ENCODE measurements at regions of chr2 and their contacts with region 1.

Region 1: DNA sequence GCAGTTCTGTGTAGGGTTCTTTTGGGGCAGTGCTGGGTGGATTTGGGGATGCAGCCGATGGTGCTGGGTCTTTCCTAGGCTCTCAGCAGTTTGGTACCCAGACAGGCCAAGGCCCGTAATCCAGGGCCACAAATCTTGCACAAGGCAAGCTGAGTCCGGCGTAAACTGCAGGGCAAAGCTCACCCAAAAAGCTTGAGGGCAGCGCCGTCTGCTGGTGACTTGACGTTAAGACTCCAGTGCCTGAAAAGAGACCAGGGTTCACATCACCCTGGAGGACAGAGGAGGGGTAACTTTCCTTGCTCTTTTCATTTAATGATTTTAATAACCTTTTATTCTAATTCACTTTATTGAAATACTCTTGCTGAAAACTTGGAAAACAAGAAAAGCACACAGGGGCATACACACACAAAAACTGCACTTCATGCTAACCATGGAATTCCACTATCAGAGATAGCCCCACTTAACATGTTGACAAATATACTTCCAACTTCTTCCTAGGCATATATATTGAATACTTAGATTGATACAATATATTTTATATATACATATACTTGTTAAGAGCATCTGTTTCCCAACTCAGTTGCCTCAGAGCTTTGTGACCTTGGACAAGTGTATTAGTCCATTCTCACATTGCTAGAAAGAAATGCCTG is 38.9 kb downstream of the CNGA3 start:
- DNase-seq: peak; percentile 93

Region 2: DNA sequence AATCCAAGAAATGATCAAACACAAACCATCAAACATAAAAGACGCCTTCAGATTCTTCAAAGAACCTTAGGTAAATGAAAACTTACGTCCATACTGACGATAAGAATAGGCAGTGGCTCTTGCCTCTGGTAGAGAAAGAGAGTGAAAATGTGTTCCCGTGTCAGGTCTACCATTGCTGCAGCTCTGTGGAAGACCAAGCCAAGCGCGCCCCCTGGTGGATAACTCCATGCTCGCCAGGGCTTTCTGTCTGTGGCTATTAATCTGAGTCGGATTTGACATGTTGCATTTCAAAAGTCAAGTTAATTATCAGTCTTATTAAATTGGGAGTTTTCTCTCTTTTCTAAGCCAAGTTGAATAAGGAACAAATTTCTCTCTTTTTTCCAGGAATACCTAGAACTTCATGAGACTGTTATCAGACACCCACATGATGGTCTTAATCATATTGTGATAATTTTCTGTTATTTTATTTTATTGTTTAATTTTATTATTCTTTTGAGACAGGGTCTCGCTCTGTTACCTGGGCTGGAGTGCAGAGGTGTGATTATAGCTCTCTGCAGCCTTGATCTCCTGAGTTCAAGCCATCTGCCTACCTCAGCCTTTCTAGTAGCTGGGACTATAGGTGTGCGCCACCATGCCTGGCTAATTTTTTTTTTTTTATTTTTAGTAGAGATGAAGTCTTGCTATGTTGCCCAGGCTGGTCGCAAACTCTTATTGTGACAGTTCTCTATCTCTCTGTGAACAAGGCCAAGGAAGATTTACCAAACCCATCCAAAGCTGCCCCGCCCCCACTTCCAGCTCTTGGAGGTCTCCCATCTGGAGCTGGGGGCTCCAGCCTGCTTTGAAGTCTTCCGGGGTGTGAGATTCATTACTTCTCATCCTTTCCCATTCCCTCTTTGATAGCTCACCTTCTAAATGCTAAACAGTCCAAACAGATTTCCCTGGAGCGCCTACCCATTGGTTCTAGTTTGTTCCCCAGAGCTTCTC is 687.6 kb before region 1 on chr2:
- intact Hi-C with region 1: loop called in 1 of 2 experiments (anchors 10 kb)
- DNase-seq: peak; percentile 97

Region 3: DNA sequence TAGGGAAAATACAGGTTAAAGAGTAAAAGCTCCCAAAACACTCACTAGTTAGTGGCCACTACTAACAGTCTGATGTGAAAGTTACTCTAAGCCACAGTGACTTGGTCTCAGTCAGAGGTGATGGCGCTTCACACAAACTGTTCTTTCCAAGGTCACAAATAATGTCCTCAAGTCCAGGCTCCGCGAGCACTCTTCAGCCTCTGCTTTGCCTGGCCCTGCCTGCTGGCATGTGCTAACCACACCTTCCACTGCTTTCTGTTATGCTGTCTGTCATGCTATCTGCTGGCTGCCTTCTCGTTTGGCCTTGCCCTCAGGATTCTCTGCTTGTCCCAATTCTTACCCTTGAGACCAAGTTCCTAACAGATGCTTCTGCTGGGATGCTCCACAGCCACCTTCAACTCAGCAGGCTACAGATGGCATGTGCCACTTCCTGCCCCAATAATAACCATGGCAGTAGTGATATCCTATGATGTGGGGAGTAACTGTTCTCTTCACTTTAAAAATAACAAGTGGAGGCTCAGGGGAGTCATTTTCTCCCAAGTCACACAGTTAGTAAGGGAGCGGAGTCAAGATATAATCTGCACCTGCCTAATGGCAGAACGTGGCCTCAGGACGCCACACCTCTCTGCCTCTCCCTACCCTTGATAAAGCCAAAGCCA is 596.1 kb before region 1 on chr2:
- intact Hi-C with region 1: no loop called
- DNase-seq: no peak

Region 4: DNA sequence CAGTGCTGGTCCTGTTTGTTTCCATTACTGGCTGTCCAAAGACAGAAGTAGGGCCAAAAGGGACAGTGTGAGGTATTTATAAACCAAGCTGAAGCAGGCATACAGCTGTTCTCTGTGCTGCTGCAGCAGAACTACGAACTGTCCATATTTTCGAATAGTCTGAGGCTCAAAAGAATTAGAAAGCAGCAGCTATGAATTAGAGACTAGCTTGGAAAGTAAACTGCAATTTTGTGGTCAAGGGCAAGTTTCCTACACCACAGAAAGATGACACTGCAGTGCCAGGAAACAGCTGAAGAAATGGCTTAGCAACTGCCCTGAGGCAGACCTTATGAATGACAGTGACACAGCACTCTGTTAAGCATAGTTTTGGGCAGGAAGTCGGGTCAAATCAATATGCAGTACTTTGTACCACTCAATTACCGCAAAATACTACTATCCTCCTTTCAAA is 514.8 kb before region 1 on chr2:
- intact Hi-C with region 1: no loop called
- DNase-seq: no peak

Region 5: GRCh38 chr2:98369710-98370239 is 15.4 kb before region 1 on chr2:
- intact Hi-C with region 1: loop called in 1 of 2 experiments (anchors 1 kb)
- DNase-seq: peak; percentile 37